AG04449 (cell line): ENCODE measurements at regions of chr5 and their contacts with region 1.

Region 1: GRCh38 chr5:172770675-172771438 is at the start of gene DUSP1:
- DNase-seq: peak; percentile 79
- H3K4me3 ChIP-seq: peak within 1 kb of the TSS; percentile 82
- CTCF ChIP-seq: peak; percentile 69

Region 2: DNA sequence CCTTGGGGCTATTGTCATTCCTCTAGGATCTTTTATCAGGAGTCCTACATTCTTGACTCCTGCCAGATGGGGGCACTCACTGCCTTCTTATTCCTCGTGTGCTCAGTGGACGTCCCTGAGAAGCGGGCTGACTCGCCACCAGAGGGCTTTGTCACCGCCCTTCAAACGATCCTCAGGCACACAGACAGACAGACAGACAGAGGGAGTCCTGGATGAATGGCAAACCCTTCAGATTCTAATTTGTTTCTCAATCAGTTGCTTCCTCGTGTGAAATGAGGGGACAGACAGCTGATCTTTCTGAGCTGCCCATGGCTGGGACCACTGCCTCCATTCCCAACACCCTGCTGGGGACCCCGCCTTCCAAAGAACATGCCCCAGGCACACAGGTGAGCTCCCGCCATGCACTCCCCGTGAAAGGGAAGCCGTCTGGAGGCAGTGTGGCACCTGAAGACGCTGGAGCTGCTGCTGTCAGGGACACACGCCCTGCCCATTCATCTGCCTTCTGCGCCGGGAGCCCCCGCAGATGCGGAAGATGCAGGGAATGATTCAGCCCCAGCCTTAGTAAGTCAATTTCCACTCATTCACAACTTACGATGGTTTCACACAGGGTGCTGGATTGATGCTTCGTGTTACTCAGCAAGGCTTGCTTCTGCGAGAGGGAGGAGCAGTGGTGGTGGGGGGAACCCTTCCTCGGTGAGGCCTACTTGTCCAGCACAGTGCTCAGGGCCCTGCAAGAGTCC is 291.6 kb before region 1 on chr5:
- CTCF ChIA-PET with region 1: no interaction called
- POLR2A ChIA-PET with region 1: no interaction called
- DNase-seq: peak; percentile 36
- H3K4me3 ChIP-seq: no peak overlapping the region
- CTCF ChIP-seq: peak; percentile 89

Region 3: DNA sequence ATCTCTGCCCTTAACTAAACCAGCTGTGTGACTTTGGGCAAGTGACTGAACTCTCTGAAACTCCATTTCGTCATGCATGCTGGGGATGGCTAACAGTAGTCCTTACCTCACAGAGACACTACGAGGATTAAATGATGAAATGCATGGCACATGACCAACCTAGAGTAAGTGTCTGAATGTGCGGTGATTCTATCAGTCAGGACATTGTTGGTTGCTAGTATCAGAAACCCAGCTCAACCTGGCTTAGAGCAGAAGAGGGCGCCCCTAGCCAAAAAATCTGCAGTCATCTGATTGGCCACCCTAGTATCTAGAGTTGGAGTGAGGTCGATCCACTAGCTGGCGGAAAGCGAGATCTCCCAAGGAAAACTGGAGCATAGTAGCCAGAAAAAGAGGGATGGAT is 104.6 kb before region 1 on chr5:
- CTCF ChIA-PET with region 1: no interaction called
- POLR2A ChIA-PET with region 1: no interaction called
- DNase-seq: no peak
- H3K4me3 ChIP-seq: no peak overlapping the region
- CTCF ChIP-seq: no peak

Region 4: GRCh38 chr5:172697123-172698121 is 73.4 kb before region 1 on chr5:
- CTCF ChIA-PET with region 1: no interaction called
- POLR2A ChIA-PET with region 1: no interaction called
- DNase-seq: no peak
- H3K4me3 ChIP-seq: peak overlapping the region; percentile 68
- CTCF ChIP-seq: peak; percentile 82

Region 5: DNA sequence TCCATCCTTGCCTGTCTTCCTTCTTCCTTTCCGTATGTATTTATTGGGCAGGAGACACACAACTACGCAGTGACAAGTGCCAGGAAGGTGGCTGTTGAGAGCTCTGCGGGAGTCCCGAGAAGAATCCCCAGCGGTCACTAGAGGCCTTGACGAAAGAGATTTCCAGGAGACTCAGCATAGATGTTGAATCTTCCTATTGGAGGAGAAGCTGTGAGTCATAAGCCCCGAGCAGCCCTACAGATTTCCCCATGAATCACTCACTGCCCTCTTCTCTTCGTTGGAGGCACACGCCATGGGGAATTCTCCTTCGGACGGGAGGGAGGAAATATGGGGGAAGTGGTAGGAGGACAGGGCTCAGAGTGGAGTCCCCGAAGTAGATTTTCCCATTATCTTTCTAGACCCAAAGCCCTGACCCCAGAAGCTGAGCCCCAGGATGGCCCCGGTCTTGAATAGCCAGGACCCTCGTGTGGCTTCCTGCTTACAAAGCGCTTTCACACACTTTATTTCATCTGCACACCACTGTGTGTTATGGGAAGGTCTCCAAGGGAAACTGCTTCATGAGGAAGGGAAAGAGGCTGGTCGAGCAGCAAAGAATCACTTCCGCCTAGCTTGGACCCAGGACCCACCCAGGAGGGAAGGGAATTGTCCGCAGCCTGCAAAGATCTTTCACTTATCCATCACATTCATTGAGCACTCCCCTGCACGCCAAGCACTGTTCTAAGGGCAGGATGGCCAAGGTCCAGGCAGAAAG is 12.6 kb before region 1 on chr5:
- CTCF ChIA-PET with region 1: interaction called, 3 read pairs
- POLR2A ChIA-PET with region 1: interaction called, 28 read pairs
- DNase-seq: peak; percentile 88
- H3K4me3 ChIP-seq: no peak overlapping the region
- CTCF ChIP-seq: no peak

Region 6: DNA sequence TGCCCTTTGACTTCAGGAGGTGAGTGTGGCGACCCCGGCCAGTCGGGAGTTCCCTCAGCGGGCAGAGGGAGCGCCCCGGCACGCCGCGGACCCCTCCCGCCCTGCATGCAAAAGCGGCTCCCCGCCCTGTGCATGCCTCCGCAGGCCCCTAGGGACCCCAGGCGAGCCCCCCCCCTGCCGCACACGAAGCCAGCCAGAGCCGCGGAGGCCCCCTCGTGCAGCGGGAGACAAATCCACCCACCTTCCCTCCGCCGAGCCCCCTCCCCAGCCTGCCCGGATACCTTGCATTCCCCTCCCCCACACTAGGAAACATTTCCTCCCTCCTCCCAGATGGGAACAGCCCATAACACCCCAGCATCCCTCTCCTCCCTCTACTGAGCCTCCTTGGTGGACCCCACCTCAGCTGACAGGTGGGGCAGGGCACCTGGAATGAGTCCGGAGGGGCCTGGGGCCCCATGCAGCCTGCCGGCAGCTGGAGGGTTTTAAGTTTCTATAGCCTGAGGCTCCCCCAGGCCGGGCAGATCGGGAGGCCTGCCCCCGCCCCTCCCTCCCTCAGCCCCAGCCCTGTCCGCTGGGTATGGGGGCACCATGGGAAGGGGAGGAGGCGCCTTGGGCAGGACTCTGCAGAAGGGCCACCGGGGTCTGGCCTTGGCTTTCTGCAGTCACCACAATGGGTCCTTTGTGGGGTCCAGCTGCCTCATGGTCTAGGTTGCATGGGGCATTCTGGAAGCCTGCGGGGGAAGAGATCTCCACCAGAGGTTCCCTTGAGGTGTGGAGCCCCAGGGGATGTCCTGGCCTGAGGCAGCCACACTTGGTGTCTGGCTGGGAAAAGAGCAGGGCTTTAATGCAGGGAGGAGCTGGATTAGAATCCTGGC is 63.8 kb after region 1 on chr5:
- CTCF ChIA-PET with region 1: interaction called, 4 read pairs
- POLR2A ChIA-PET with region 1: interaction called, 19 read pairs
- DNase-seq: no peak
- H3K4me3 ChIP-seq: peak overlapping the region; percentile 91
- CTCF ChIP-seq: no peak

Region 7: GRCh38 chr5:172881691-172882370 is 111.0 kb after region 1 on chr5:
- CTCF ChIA-PET with region 1: interaction called, 3 read pairs
- POLR2A ChIA-PET with region 1: interaction called, 15 read pairs
- DNase-seq: no peak
- H3K4me3 ChIP-seq: no peak overlapping the region
- CTCF ChIP-seq: no peak

Region 8: GRCh38 chr5:172910828-172911627 is 140.2 kb after region 1 on chr5:
- CTCF ChIA-PET with region 1: interaction called, 17 read pairs
- POLR2A ChIA-PET with region 1: interaction called, 59 read pairs
- DNase-seq: no peak
- H3K4me3 ChIP-seq: no peak overlapping the region
- CTCF ChIP-seq: peak; percentile 38

Region 9: GRCh38 chr5:172958331-172959046 is 187.6 kb after region 1 on chr5:
- CTCF ChIA-PET with region 1: interaction called, 3 read pairs
- POLR2A ChIA-PET with region 1: interaction called, 42 read pairs
- DNase-seq: no peak
- H3K4me3 ChIP-seq: peak overlapping the region; percentile 51
- CTCF ChIP-seq: no peak

Region 10: GRCh38 chr5:173094012-173094661 is 323.3 kb after region 1 on chr5:
- CTCF ChIA-PET with region 1: no interaction called
- POLR2A ChIA-PET with region 1: no interaction called
- DNase-seq: peak; percentile 23
- H3K4me3 ChIP-seq: no peak overlapping the region
- CTCF ChIP-seq: no peak